GM12878 (cell line): ENCODE measurements at regions of chrX and their contacts with region 1.

Region 1: GRCh38 chrX:31099536-31100090 is 27.8 kb upstream of the FTHL17 start:
- DNase-seq: peak; percentile 77
- ATAC-seq: peak; percentile 93
- H3K4me3 ChIP-seq: no peak overlapping the region
- H3K27ac ChIP-seq: peak overlapping the region; percentile 54
- H3K4me1 ChIP-seq: peaks cover 14% of the 10 kb centered on the region; the same call in 1 of the 2 replicates
- H3K27me3 ChIP-seq: no peaks in the 10 kb centered on the region
- CTCF ChIP-seq: no peak
- EP300 ChIP-seq: peak; percentile 64 to 78
- POLR2A ChIP-seq: no peak
- RAD21 ChIP-seq: 0 out of 2 replicates have a peak, but pooled peaks have one; percentile 7

Region 2: GRCh38 chrX:31136144-31136611 is 36.6 kb after region 1 on chrX:
- CTCF ChIA-PET with region 1: interaction called, 3 read pairs
- POLR2A ChIA-PET with region 1: no interaction called
- RAD21 ChIA-PET with region 1: interaction called, 4 read pairs
- SMC1A ChIA-PET with region 1: interaction called, 5 read pairs
- in situ Hi-C with region 1: no loop called
- intact Hi-C with region 1: loop called (anchors 1 kb)
- DNase-seq: peak; percentile 82
- ATAC-seq: peak; percentile 94
- H3K4me3 ChIP-seq: no peak overlapping the region
- H3K27ac ChIP-seq: peak overlapping the region; percentile 63
- H3K4me1 ChIP-seq: peaks cover 11% of the 10 kb centered on the region
- H3K27me3 ChIP-seq: no peaks in the 10 kb centered on the region
- CTCF ChIP-seq: no peak
- EP300 ChIP-seq: peak; percentile 63 to 87; a peak in 2 of 4 replicates
- POLR2A ChIP-seq: no peak
- RAD21 ChIP-seq: no peak